ENCODE measurements at regions of chr2 and their contacts with region 1.

Region 1: DNA sequence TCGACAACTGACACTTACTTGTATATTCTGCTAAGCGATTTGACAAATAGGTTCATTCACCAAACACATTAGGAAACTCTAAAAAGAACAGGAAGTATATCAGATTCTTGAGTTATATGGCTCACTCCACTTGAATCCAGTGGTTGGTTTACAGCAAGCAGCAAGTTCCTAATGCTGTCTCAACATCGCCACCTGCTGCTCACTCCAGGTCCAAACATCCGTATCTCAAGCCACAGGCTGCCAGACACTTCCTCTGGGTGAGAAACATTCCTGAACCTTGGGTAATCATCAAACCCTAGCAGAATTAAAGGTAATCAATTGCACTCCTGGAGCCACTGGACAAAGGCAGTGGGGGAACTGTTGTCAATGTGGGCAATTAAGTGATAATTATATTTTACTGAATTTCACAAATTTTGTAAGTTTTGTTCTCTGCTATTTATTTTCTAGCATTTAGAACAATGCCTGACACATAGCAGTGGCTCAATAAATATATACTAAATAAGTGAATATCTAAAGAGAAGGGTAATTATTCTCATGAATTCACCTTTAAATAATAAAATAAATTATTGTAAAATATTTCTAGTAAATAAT is 107.1 kb upstream of the TTN start:
- DNase-seq: peak; percentile 61 to 84 (median 73)
- ATAC-seq: peak; percentile 95
- H3K4me3 ChIP-seq: no peak overlapping the region
- H3K27ac ChIP-seq: no peak overlapping the region
- H3K4me1 ChIP-seq: peaks cover 0 to 20% of the 10 kb centered on the region in 2 donors
- H3K27me3 ChIP-seq: no peaks in the 10 kb centered on the region
- CTCF ChIP-seq: peak; percentile 79

Region 2: GRCh38 chr2:178796079-178796677 is 118.2 kb before region 1 on chr2:
- intact Hi-C with region 1: loop called in 1 of 2 experiments (anchors 5 kb)
- DNase-seq: peak in 2 of 4 donors; percentile 30 to 57
- ATAC-seq: no peak
- H3K4me3 ChIP-seq: no peak overlapping the region
- H3K27ac ChIP-seq: no peak overlapping the region
- H3K4me1 ChIP-seq: no peaks in the 10 kb centered on the region
- H3K27me3 ChIP-seq: no peaks in the 10 kb centered on the region
- CTCF ChIP-seq: peak; percentile 33 to 55

Region 3: DNA sequence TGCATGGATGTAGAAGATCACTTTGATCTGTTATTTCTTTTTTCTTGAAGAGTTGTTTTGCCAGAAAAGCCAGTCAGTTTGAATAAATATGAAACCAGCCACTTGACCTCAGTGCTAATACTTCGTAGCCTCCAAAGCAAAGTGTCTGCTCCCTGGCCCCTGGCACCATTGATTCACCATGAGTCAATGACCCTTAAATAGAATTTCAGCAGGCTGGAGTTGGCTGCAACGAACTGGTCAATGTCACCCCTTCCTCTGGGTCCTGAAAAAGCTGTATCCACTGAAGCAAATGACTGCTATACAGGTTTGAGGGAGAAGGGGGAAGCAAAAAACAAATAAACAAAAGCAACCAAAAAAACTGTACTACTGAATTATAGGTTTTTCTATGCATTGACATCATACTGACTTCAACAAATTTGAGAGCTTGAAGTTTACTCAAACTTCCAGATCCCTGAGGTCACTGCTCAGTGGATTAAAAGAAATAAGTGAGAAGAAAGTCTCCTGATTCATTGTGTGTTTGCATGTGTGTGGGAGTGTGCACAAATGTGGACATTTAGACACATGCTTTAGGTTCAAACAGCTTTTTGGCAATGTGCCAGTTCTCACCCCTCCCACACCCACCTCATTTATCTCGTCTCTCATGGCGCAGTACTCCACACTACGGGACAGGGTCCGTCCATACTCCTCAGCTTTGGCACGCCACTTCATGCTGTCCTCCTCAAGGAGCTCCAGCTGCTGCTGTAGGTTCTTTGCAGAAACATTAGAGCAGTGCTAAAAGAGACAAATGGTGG is 49.0 kb before region 1 on chr2:
- intact Hi-C with region 1: no loop called
- DNase-seq: peak in 1 of 4 donors; percentile 23
- ATAC-seq: peak; percentile 49
- H3K4me3 ChIP-seq: no peak overlapping the region
- H3K27ac ChIP-seq: no peak overlapping the region
- H3K4me1 ChIP-seq: peaks cover 4 to 10% of the 10 kb centered on the region in 2 donors
- H3K27me3 ChIP-seq: no peaks in the 10 kb centered on the region
- CTCF ChIP-seq: no peak

Region 4: DNA sequence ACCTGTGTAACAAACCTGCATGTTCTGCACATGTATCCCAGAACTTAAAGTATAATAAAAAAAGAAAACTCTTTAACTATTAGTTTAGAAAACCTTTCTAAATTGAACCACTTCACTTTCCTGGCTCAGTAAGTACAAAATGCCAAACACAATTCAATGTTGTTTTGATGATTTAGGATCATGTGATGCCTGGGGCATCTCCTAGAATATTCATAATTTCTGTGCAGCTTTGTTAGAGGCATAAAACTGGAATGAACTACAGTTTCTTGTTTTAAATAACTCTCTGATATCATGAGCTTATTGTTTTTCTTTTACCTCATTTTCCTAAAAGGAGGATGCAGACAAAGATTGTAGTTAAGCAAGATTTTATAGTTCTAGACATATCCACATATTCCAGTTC is 489.3 kb after region 1 on chr2:
- intact Hi-C with region 1: no loop called
- DNase-seq: no peak
- ATAC-seq: no peak
- H3K4me3 ChIP-seq: no peak overlapping the region
- H3K27ac ChIP-seq: no peak overlapping the region
- H3K4me1 ChIP-seq: no peaks in the 10 kb centered on the region
- H3K27me3 ChIP-seq: no peaks in the 10 kb centered on the region
- CTCF ChIP-seq: no peak